K562 (cell line): ENCODE measurements at regions of chr12 and their contacts with region 1.

Region 1: DNA sequence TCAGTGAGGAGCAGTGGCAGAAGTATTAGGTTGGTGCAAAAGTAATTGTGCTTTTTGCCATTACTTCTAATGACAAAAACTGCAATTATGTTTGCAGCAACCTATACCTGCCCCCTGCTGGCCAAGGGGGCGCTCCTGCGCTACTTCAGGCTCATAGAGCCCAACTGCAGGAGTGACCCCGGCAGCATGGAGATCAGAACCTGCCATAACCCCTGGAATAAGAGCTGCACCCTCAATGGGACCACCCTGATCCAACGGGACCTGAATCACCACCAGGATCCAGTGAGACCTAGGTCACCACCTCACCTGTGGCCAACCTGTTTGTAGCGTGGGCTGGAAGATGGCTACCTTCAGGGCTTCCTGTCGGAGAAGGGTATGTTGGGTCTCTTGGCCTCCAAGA is 8.2 kb upstream of the C12orf42 start:
- DNase-seq: peak in 3 of 4 experiments; percentile 12 to 50 (median 30)
- ATAC-seq: peak; percentile 94
- H3K4me3 ChIP-seq: no peak overlapping the region
- H3K27ac ChIP-seq: no peak overlapping the region
- H3K4me1 ChIP-seq: no peaks in the 10 kb centered on the region
- H3K27me3 ChIP-seq: no peaks in the 10 kb centered on the region
- CTCF ChIP-seq: peak; percentile 56 to 68 (median 62)
- EP300 ChIP-seq: no peak
- POLR2A ChIP-seq: no peak
- RAD21 ChIP-seq: peak in 1 of 2 experiments; percentile 51; a peak in 3 of 4 replicates

Region 2: GRCh38 chr12:102948941-102949352 is 555.0 kb before region 1 on chr12:
- CTCF ChIA-PET with region 1: no interaction called
- POLR2A ChIA-PET with region 1: no interaction called
- in situ Hi-C with region 1: no loop called
- intact Hi-C with region 1: loop called (anchors 2 kb)
- DNase-seq: peak; percentile 45 to 56 (median 52)
- ATAC-seq: peak; percentile 60; the same call in 2 of the 3 replicates
- H3K4me3 ChIP-seq: no peak overlapping the region
- H3K27ac ChIP-seq: no peak overlapping the region
- H3K4me1 ChIP-seq: peaks cover 0 to 3% of the 10 kb centered on the region in 2 experiments; a peak in 1 of 5 replicates
- H3K27me3 ChIP-seq: no peaks in the 10 kb centered on the region
- CTCF ChIP-seq: peak; percentile 67 to 86 (median 77)
- EP300 ChIP-seq: no peak
- POLR2A ChIP-seq: no peak
- RAD21 ChIP-seq: peak; percentile 55 to 77

Region 3: DNA sequence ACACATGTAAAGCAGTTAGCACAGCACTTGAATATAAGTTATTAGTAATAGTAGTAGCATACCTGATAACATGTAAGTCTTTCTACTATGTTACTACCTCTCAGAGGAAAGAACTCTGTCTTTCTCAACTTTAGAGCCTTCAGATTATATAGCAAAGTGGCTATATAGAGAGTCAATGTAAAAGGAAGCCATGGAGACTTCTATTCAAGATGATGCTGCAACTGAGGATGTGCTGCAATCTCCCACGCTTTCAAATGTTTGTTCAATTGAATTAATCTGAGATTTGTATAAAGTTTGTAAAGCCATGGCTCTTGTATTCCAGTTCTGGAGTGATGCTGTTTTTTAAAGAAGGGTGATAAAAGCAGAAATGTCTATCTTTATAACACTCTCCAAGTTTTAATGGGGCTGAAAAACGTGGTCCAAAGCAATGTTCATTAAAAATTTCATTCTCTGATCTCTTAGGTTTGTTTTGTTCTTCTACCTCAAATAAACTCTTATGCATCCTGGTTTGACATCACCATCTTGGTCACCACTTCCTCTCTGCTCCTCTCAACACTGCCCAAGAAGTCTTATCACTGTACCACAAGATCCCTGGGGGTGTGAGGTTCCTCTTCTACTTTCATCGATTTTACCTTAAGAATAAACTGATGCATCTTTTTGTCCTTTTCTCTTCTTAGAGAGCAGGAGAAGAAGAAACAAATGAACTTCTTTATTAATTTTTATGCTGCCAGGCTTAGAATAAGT is 48.8 kb before region 1 on chr12:
- CTCF ChIA-PET with region 1: no interaction called
- POLR2A ChIA-PET with region 1: no interaction called
- in situ Hi-C with region 1: no loop called
- intact Hi-C with region 1: no loop called
- DNase-seq: no peak
- ATAC-seq: no peak
- H3K4me3 ChIP-seq: no peak overlapping the region
- H3K27ac ChIP-seq: no peak overlapping the region
- H3K4me1 ChIP-seq: no peaks in the 10 kb centered on the region
- H3K27me3 ChIP-seq: no peaks in the 10 kb centered on the region
- CTCF ChIP-seq: no peak
- EP300 ChIP-seq: no peak
- POLR2A ChIP-seq: no peak
- RAD21 ChIP-seq: no peak